ENCODE measurements at regions of chrX and their contacts with region 1.

Region 1: DNA sequence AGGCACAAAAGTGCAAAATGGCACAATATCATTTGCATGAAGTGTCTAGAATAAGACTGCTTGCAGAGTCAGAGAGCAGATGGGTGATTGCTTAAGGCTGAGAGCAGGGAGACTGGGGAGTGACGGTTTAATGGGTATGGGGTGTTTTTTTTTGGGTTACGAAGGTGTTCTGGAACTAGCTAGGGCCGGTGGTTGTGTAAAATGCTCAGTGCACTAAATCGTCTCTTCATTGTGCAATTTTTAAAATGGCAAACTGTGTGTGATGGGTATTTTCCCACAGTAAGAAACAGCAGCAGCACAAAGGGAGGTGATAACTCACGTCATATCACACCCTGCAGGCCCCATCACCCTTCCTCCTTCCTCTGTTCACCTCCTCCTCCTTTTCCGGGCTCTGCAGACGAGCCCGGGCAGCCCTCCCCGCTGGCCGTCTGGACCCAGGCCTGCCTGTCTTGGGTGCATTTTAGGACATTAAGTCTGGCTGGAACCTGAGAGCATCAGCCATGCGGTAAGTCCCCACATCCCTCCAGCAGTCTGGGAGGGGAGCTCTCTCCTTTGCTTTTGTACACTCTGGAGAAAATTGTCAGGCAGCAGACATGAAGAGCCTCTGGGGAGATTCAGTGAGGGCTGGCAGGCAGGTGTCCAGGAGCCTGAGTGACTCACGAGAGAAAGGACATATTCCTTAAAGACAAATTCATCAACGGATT is 42.7 kb downstream of the ASMT start:
- DNase-seq: peak; percentile 82
- H3K4me3 Mint-ChIP-seq: peak overlapping the region; percentile 97
- H3K27ac Mint-ChIP-seq: peak overlapping the region; percentile 100
- H3K4me1 Mint-ChIP-seq: peaks cover 27% of the 10 kb centered on the region
- H3K27me3 Mint-ChIP-seq: no peaks in the 10 kb centered on the region

Region 2: GRCh38 chrX:1246816-1247215 is 410.7 kb before region 1 on chrX:
- CTCF ChIA-PET with region 1: no interaction called
- POLR2A ChIA-PET with region 1: no interaction called
- intact Hi-C with region 1: loop called (anchors 5 kb)
- DNase-seq: peak; percentile 91
- H3K4me3 Mint-ChIP-seq: no peak overlapping the region
- H3K27ac Mint-ChIP-seq: peak overlapping the region; percentile 69
- H3K4me1 Mint-ChIP-seq: peaks cover 29% of the 10 kb centered on the region
- H3K27me3 Mint-ChIP-seq: no peaks in the 10 kb centered on the region

Region 3: DNA sequence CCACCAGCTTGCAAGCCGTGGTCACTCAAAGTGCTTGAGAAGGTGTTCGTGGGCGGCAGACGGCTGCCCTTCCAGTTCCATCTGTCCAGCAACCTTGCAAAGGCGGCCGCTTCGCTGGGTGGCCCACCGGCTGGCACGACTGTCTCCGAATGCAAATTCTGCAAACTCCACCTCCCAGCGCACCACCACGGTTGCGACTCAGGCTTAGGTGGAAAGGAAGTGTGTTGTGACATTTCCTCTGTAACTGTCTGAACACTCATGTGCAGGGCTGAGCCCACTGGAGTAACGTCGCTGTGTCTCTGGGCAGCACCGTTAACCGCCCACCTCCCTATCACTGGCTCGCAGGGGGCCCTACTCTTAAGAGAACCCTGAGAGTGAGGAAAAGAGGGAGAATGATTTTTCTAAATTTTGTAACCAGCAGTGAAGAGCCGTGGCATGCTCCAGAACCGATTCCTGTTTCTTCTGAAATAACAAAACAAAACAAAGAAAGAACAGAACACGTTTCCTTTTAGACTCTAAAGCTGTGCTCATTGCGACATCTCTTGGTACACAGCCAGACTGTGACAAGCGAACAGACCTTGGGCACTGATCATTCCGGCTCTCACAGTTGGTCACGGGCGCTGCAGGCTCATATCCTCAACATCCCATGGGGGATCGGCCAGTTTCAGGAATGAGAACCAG is 120.3 kb before region 1 on chrX and contains the start of gene P2RY8:
- CTCF ChIA-PET with region 1: no interaction called
- POLR2A ChIA-PET with region 1: no interaction called
- intact Hi-C with region 1: loop called (anchors 1 kb)
- DNase-seq: peak; percentile 90
- H3K4me3 Mint-ChIP-seq: peak within 1 kb of the TSS; percentile 94
- H3K27ac Mint-ChIP-seq: peak within 1 kb of the TSS; percentile 99
- H3K4me1 Mint-ChIP-seq: peaks cover 15% of the 10 kb centered on the region
- H3K27me3 Mint-ChIP-seq: no peaks in the 10 kb centered on the region
- total RNA-seq, gene P2RY8: 30.2 to 32.7 TPM

Region 4: GRCh38 chrX:1679238-1679637 is 21.7 kb after region 1 on chrX:
- CTCF ChIA-PET with region 1: no interaction called
- POLR2A ChIA-PET with region 1: no interaction called
- intact Hi-C with region 1: loop called (anchors 1 kb)
- DNase-seq: peak; percentile 63
- H3K4me3 Mint-ChIP-seq: no peak overlapping the region
- H3K27ac Mint-ChIP-seq: peak overlapping the region; percentile 46
- H3K4me1 Mint-ChIP-seq: peaks cover 32% of the 10 kb centered on the region
- H3K27me3 Mint-ChIP-seq: no peaks in the 10 kb centered on the region

Region 5: GRCh38 chrX:2595258-2595657 is 937.7 kb after region 1 on chrX:
- CTCF ChIA-PET with region 1: no interaction called
- POLR2A ChIA-PET with region 1: no interaction called
- intact Hi-C with region 1: loop called (anchors 1 kb)
- DNase-seq: no peak
- H3K4me3 Mint-ChIP-seq: no peak overlapping the region
- H3K27ac Mint-ChIP-seq: no peak overlapping the region
- H3K4me1 Mint-ChIP-seq: peaks cover 2% of the 10 kb centered on the region
- H3K27me3 Mint-ChIP-seq: no peaks in the 10 kb centered on the region

Region 6: DNA sequence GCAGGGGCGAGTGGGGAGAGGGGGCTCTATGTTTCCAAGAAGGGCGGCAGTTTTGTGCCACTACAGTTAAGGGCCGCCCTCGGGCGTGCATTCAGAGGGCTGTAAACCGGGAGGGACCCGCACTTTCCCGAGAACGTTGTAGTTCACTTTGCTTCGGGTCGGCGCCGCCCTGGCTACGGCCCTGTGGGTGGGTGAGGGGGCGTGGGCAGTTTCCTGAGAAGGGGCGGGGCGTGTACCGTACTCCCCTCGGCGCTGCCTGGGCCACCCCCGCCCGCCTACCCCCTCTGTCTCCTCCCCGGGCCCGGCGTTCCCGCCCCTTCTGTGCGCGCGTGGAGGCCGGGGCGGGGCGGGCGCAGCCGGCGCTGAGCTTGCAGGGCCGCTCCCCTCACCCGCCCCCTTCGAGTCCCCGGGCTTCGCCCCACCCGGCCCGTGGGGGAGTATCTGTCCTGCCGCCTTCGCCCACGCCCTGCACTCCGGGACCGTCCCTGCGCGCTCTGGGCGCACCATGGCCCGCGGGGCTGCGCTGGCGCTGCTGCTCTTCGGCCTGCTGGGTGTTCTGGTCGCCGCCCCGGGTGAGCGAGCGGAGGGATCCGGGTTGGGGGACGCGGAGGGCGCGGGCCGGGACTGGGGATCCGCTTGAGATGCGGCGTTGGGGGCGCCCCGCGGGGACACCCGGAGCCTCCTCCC is 1033.5 kb after region 1 on chrX and contains the start of gene CD99:
- CTCF ChIA-PET with region 1: no interaction called
- POLR2A ChIA-PET with region 1: no interaction called
- intact Hi-C with region 1: loop called (anchors 5 kb)
- DNase-seq: peak; percentile 91
- H3K4me3 Mint-ChIP-seq: peak within 1 kb of the TSS; percentile 86
- H3K27ac Mint-ChIP-seq: peak within 1 kb of the TSS; percentile 96
- H3K4me1 Mint-ChIP-seq: peaks cover 25% of the 10 kb centered on the region
- H3K27me3 Mint-ChIP-seq: no peaks in the 10 kb centered on the region
- total RNA-seq, gene CD99: 282 to 283 TPM